Activated naive CD4-positive, alpha-beta T cell treated with anti-CD3 and anti-CD28 coated beads for 36 hours (primary cell): ENCODE measurements at regions of chr15 and their contacts with region 1.

Region 1: GRCh38 chr15:85318048-85318731 is 62.2 kb upstream of the AKAP13 start:
- DNase-seq: peak; percentile 40
- H3K4me3 Mint-ChIP-seq: no peak overlapping the region
- H3K27ac Mint-ChIP-seq: no peak overlapping the region
- H3K4me1 Mint-ChIP-seq: peaks cover 43% of the 10 kb centered on the region
- H3K27me3 Mint-ChIP-seq: no peaks in the 10 kb centered on the region

Region 2: GRCh38 chr15:85330901-85331588 is 12.9 kb after region 1 on chr15:
- CTCF ChIA-PET with region 1: interaction called, 10 read pairs
- intact Hi-C with region 1: loop called (anchors 1 kb)
- DNase-seq: peak; percentile 79
- H3K4me3 Mint-ChIP-seq: peak overlapping the region; percentile 85
- H3K27ac Mint-ChIP-seq: peak overlapping the region; percentile 6
- H3K4me1 Mint-ChIP-seq: peaks cover 22% of the 10 kb centered on the region
- H3K27me3 Mint-ChIP-seq: no peaks in the 10 kb centered on the region

Region 3: DNA sequence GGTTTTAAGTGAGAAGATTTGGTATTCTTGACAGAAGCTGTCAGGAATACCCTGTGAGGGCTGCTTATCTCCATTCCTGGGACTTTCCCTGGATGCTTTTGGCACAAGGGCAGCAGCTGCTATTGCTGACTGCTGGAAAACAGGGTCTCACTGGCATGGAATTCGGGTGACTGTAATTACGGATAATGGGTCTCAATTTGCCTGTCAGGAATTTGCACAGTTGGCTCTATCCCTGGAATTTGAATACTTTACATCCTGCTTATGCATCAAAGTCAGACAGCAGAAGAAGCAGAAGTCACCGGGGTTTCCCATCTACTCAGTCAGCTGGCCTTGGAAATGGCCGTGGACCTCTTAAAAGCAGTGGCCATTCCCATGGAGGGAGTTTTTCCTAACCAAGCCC is 36.3 kb after region 1 on chr15:
- CTCF ChIA-PET with region 1: no interaction called
- intact Hi-C with region 1: loop called (anchors 5 kb)
- DNase-seq: no peak
- H3K4me3 Mint-ChIP-seq: no peak overlapping the region
- H3K27ac Mint-ChIP-seq: no peak overlapping the region
- H3K4me1 Mint-ChIP-seq: peaks cover 11% of the 10 kb centered on the region
- H3K27me3 Mint-ChIP-seq: peaks cover 2% of the 10 kb centered on the region